Prostate gland (tissue), 2 donors: ENCODE measurements at regions of chr9 and their contacts with region 1.

Region 1: DNA sequence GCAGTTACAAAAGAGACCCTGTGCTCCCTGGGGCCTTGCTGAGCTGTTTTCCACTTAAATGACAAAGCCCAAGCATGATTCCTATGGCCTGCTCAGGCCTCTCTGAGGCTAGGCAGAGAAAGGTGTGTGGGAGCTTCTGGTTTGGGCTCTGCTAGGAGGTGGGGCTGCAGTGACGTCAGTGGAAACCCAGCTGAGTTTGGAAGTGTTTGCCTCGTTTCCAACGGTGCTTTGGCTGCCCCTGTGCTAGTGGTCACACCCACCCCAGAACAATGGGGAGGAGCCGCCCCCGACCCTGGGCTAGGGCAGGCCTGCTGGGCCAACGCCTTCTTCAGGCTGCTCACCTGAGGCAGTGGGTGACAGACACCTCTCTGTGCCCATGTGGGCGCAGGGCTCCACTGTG is 10.4 kb downstream of the ANGPTL2 start:
- DNase-seq: no peak
- H3K4me3 ChIP-seq: no peak overlapping the region
- H3K27ac ChIP-seq: no peak overlapping the region
- H3K4me1 ChIP-seq: no peaks in the 10 kb centered on the region
- H3K27me3 ChIP-seq: no peaks in the 10 kb centered on the region
- CTCF ChIP-seq: no peak
- POLR2A ChIP-seq: no peak

Region 2: DNA sequence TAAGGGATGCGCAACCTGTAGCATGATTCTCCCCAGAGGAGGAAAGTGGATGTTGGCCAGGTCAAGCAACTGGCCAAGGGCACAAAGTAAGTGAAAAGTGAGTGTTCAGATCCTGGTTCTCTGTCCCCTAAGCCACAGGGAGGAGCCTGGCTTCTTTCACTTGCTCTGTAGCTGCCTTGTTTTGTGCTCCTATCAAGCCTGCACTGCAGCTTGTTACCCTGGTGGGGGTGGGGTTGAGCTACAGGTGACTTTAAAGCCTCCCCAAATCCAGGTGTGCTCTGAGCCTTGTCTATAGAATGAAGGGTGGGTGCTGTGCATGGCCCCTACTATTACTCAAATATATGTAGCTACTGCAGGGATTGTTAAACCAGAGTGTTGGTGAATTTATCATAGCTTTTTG is 164.5 kb before region 1 on chr9:
- intact Hi-C with region 1: loop called (anchors 10 kb)
- DNase-seq: no peak
- H3K4me3 ChIP-seq: no peak overlapping the region
- H3K27ac ChIP-seq: no peak overlapping the region
- H3K4me1 ChIP-seq: no peaks in the 10 kb centered on the region
- H3K27me3 ChIP-seq: no peaks in the 10 kb centered on the region
- CTCF ChIP-seq: peak in 3 of 4 experiments; percentile 11 to 35 (median 25)
- POLR2A ChIP-seq: no peak